ENCODE measurements at regions of chr13 and their contacts with region 1.

Region 1: GRCh38 chr13:90261343-90261742 is 1086.1 kb upstream of the MIR17HG start:
- DNase-seq: no peak
- ATAC-seq: no peak
- H3K4me3 Mint-ChIP-seq: no peak overlapping the region
- H3K27ac Mint-ChIP-seq: no peak overlapping the region
- H3K4me1 Mint-ChIP-seq: no peaks in the 10 kb centered on the region
- H3K27me3 Mint-ChIP-seq: no peaks in the 10 kb centered on the region
- CTCF ChIP-seq: no peak

Region 2: DNA sequence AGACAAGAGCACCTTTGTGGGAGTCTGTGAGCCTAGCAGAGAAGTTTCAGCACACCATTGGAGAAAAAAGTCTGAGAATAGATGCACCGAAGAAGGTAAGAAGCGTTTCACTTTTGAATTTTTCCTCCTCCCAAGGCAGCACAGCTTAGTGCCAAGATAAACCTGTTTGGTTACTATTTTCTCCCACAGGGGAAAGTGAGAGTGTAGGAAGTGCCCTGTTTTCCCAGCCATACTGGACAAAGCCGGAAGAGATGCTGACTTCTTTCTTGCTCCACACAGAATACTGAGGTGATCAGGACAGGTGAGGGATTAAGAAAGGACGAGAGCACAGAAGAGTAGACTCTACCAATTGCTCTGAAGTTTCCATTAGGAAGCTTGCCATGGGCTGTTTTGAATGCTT is 75.2 kb after region 1 on chr13:
- CTCF ChIA-PET with region 1: no interaction called
- POLR2A ChIA-PET with region 1: no interaction called
- intact Hi-C with region 1: loop called (anchors 5 kb)
- DNase-seq: no peak
- ATAC-seq: no peak
- H3K4me3 Mint-ChIP-seq: no peak overlapping the region
- H3K27ac Mint-ChIP-seq: no peak overlapping the region
- H3K4me1 Mint-ChIP-seq: no peaks in the 10 kb centered on the region
- H3K27me3 Mint-ChIP-seq: no peaks in the 10 kb centered on the region
- CTCF ChIP-seq: no peak

Region 3: GRCh38 chr13:90723381-90723780 is 462.0 kb after region 1 on chr13:
- CTCF ChIA-PET with region 1: no interaction called
- POLR2A ChIA-PET with region 1: no interaction called
- intact Hi-C with region 1: no loop called
- DNase-seq: no peak
- ATAC-seq: no peak
- H3K4me3 Mint-ChIP-seq: no peak overlapping the region
- H3K27ac Mint-ChIP-seq: no peak overlapping the region
- H3K4me1 Mint-ChIP-seq: no peaks in the 10 kb centered on the region
- H3K27me3 Mint-ChIP-seq: no peaks in the 10 kb centered on the region
- CTCF ChIP-seq: no peak